Right cardiac atrium (tissue), 5 donors: ENCODE measurements at regions of chr3 and their contacts with region 1.

Region 1: DNA sequence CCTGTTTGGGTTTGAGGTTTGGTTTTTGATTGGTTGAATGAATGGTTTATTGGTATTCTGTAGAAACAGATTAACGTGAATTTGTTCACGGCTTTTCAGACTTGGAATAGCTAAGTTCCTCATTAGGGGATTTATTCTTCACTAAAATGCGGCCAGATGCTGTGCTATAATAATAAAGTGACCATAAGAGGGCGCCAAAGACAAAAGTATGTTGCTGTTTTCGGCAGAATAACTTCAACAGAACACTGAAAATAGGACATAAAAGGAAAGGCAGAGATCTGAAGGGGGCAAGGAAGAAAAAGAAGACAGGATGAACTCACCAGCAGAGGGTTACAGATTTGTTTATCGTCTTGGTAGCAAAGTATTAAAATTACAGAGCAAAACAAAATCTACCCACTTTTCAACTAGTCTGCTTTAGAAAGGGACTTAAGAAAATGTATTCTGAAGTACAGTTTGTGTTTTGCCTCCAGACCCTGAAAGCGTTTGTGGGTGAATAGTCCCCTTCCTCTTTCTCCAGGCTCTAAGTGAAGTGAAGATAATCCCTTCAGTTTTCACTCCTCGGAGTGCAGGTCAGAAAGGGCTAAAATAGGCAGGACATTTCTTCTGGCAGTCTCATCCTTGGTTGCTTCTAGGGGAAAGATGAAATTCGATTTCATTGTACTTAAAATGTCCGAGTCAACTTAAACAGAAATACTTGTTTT is 147.6 kb downstream of the IL20RB start:
- DNase-seq: no peak
- ATAC-seq: peak; percentile 58 to 72
- H3K4me3 ChIP-seq: no peak overlapping the region
- H3K27ac ChIP-seq: no peak overlapping the region
- H3K4me1 ChIP-seq: no peaks in the 10 kb centered on the region
- H3K27me3 ChIP-seq: peaks cover 4% of the 10 kb centered on the region

Region 2: GRCh38 chr3:137150825-137151224 is 45.4 kb after region 1 on chr3:
- intact Hi-C with region 1: no loop called
- DNase-seq: no peak
- ATAC-seq: no peak
- H3K4me3 ChIP-seq: no peak overlapping the region
- H3K27ac ChIP-seq: no peak overlapping the region
- H3K4me1 ChIP-seq: no peaks in the 10 kb centered on the region
- H3K27me3 ChIP-seq: no peaks in the 10 kb centered on the region

Region 3: GRCh38 chr3:137946345-137946973 is 841.0 kb after region 1 on chr3:
- intact Hi-C with region 1: loop called in 2 of 4 experiments (anchors 5 kb)
- DNase-seq: peak; percentile 33 to 73 (median 60)
- ATAC-seq: peak; percentile 16 to 48
- H3K4me3 ChIP-seq: no peak overlapping the region
- H3K27ac ChIP-seq: no peak overlapping the region
- H3K4me1 ChIP-seq: no peaks in the 10 kb centered on the region
- H3K27me3 ChIP-seq: no peaks in the 10 kb centered on the region

Region 4: DNA sequence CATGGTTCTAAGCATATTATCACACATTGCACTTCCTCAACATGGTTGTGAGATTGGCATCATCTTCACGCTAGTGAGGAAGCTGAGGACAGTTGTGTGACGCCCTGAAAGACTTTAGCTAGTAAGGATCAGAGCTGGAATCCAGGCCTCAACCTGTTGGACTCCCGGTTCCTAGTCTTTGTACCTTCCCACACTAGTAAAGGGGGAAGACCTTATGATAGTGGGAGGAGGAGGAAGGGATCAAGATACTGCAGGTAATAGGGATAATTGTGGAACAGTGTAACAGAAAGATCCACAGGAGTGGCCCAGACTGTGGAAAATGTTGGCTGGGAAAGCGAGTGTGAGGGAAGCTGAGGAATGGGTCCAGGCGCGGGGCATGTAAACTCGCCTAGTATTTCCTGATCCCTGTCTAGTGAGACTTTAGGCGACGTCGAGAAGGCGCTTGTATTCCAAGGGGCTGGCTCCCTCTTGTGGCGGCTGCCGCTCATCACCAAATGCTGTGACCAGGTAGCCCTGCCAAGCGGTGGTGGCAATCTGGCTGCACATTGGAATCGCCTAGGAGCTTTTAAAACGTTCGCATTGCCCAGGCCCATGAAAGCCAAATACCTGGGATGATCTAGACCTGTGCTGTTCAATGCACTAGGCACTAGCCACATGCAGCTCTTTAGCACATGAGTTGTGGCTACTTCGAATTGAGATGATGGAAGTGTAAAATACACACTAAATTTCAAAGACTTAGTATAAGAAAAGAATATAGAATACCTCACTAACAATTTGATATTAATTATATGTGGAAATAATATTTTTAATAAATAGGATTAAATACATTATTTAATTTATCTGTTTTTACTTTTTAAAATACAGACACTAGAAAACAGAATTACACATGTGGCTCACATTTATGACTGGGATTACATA is 865.7 kb after region 1 on chr3:
- intact Hi-C with region 1: loop called in 1 of 4 experiments (anchors 10 kb)
- DNase-seq: peak; percentile 72 to 91 (median 89)
- ATAC-seq: peak; percentile 88 to 89
- H3K4me3 ChIP-seq: no peak overlapping the region
- H3K27ac ChIP-seq: no peak overlapping the region
- H3K4me1 ChIP-seq: no peaks in the 10 kb centered on the region
- H3K27me3 ChIP-seq: no peaks in the 10 kb centered on the region